Thyroid gland (tissue), 4 donors: ENCODE measurements at regions of chr2 and their contacts with region 1.

Region 1: GRCh38 chr2:234544659-234545611 is 48.1 kb upstream of the ARL4C start:
- DNase-seq: peak; percentile 39 to 60
- H3K4me3 ChIP-seq: no peak overlapping the region
- H3K27ac ChIP-seq: no peak overlapping the region
- H3K4me1 ChIP-seq: peaks cover 0 to 5% of the 10 kb centered on the region in 2 donors
- H3K27me3 ChIP-seq: no peaks in the 10 kb centered on the region
- CTCF ChIP-seq: peak; percentile 60 to 95 (median 76)
- POLR2A ChIP-seq: no peak

Region 2: GRCh38 chr2:234446404-234447076 is 98.4 kb before region 1 on chr2:
- intact Hi-C with region 1: no loop called
- DNase-seq: peak; percentile 30 to 41
- H3K4me3 ChIP-seq: no peak overlapping the region
- H3K27ac ChIP-seq: no peak overlapping the region
- H3K4me1 ChIP-seq: peaks cover 0 to 5% of the 10 kb centered on the region in 2 donors
- H3K27me3 ChIP-seq: no peaks in the 10 kb centered on the region
- CTCF ChIP-seq: no peak
- POLR2A ChIP-seq: no peak

Region 3: DNA sequence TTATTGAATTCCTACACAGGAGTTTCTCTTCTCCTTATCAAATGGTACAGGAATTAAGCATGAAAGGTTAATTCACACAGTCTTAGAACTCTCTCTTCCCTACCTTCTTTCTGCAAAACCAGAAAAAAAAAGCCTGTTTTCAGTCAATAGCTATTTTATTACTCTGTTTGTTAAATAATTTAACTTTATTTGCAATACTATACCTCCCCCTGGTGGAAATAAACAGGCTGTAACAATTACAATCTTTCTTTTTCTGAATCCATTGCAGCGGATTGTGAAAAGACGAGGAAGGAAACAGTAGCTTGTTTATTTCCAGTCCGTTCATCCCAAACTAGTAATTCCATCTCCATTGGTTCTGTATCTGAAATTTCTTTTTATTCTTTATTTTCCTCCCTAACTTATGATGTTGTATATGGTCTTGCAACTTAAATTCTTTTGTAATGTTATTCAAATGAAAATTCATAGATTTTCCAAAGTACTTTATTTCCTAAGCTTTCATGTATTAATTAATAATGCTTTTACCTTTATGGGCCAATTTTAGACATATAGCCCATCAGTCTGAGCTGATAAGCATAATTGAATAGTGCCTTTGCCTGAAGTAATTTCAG is 572.1 kb after region 1 on chr2:
- intact Hi-C with region 1: loop called (anchors 5 kb)
- DNase-seq: no peak
- H3K4me3 ChIP-seq: no peak overlapping the region
- H3K27ac ChIP-seq: no peak overlapping the region
- H3K4me1 ChIP-seq: no peaks in the 10 kb centered on the region
- H3K27me3 ChIP-seq: no peaks in the 10 kb centered on the region
- CTCF ChIP-seq: peak; percentile 17 to 80 (median 63)
- POLR2A ChIP-seq: no peak